ENCODE measurements at regions of chr3 and their contacts with region 1.

Region 1: DNA sequence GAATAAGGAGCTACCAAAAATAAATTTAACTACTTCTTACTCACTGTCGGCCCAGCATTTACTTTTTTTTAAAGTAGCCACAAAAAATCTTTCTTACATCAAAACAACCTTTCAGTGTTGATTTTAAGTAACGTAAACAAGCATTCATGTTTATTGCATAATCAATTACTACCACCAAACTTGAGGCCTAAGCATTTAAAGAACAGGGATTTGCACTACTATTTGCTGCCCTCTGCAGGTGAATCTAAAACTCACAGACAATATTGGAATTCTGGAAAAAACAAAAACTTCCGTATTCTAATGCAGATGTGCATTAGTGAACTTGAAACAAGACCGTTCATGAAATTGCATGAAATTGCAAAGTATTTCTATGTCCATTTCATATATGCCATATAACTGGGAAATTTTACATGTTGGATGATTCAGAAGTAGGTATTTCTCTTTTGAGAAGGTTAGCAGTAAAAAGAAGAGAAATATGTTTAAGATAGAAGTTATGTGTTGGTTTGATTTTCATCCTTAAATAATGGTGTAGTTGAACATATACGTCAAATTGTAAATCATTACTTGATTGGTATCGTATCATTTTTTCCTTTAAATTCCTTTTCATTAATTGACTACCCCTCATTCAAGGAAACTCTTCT is 55.6 kb downstream of the CGGBP1 start:
- DNase-seq: peak in 1 of 2 experiments; percentile 44
- H3K4me3 ChIP-seq: no peak overlapping the region
- H3K4me3 Mint-ChIP-seq: no peak overlapping the region
- H3K27ac Mint-ChIP-seq: no peak overlapping the region
- H3K4me1 ChIP-seq: no peaks in the 10 kb centered on the region
- H3K4me1 Mint-ChIP-seq: no peaks in the 10 kb centered on the region
- H3K27me3 ChIP-seq: no peaks in the 10 kb centered on the region
- H3K27me3 Mint-ChIP-seq: peaks cover 4% of the 10 kb centered on the region
- CTCF ChIP-seq: peak; percentile 60 to 70

Region 2: GRCh38 chr3:87350364-87351199 is 652.7 kb before region 1 on chr3:
- CTCF ChIA-PET with region 1: interaction called, 5 read pairs
- POLR2A ChIA-PET with region 1: no interaction called
- intact Hi-C with region 1: loop called (anchors 1 kb)
- DNase-seq: peak; percentile 22 to 36
- H3K4me3 ChIP-seq: no peak overlapping the region
- H3K4me3 Mint-ChIP-seq: no peak overlapping the region
- H3K27ac Mint-ChIP-seq: no peak overlapping the region
- H3K4me1 ChIP-seq: peaks cover 8% of the 10 kb centered on the region; the same call in 1 of the 2 replicates
- H3K4me1 Mint-ChIP-seq: peaks cover 7% of the 10 kb centered on the region
- H3K27me3 ChIP-seq: no peaks in the 10 kb centered on the region
- H3K27me3 Mint-ChIP-seq: no peaks in the 10 kb centered on the region
- CTCF ChIP-seq: peak; percentile 77 to 80

Region 3: DNA sequence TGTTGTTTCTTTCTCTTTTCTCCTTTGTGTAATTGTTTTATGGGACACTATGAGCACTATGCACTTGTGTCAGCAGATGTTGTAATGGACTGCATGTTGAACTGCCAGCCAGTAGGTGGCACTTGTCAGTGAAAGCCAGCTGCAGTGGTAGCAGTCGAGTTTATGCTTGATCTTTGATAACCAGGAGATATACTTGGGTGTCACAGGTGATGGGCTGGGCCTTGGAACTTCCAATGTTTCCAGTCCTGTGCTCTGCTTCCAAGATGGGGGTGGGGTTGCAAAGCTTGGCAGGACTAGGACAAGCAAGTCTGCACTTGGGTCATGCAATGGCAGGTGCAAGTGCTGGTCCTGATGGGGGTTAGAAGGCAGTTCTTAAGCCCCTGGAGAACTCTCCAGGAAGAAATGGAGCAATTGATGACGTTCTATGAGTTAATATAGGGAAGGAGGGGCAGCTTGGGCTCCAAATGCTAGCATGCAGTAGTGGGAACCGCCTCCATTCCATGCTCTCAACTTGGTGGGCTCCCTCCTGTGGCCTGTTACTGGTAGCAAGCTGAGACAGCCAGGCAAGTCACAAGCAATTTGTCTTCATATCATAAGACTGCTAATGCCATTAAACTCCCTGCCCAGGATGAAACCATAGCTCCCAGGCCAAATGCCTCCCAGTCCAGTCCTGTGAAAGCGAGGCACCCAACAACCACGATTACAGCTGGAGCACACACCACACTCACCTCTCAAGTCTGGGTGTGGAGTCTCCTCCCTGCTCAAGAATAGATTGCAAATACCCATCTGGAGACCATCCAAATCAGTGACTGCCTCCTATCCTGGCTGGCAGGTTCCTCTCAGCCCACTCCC is 231.7 kb before region 1 on chr3:
- CTCF ChIA-PET with region 1: interaction called, 3 read pairs
- POLR2A ChIA-PET with region 1: no interaction called
- intact Hi-C with region 1: loop called (anchors 1 kb)
- DNase-seq: peak; percentile 45 to 46
- H3K4me3 ChIP-seq: no peak overlapping the region
- H3K4me3 Mint-ChIP-seq: no peak overlapping the region
- H3K27ac Mint-ChIP-seq: no peak overlapping the region
- H3K4me1 ChIP-seq: no peaks in the 10 kb centered on the region
- H3K4me1 Mint-ChIP-seq: no peaks in the 10 kb centered on the region
- H3K27me3 ChIP-seq: no peaks in the 10 kb centered on the region
- H3K27me3 Mint-ChIP-seq: peaks cover 6% of the 10 kb centered on the region
- CTCF ChIP-seq: peak; percentile 43 to 75

Region 4: DNA sequence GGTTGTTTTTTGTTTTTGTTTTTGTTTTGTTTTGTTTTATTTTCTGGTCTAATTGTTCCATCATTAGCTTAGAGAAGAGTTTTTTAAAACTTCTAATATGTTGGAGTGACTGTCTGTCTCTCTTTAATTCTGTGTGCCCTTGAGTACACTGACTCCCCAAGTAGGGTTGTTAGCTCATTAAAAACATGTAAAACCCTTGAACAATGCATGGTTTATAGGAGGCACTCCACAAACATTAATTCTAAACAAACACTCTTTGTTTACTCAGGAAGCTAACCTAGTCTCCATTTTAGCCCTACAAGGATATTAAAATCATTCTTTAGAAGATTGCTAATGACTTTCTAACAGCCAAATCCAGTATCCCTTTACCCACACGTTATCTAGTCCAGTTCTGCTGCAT is 44.9 kb before region 1 on chr3:
- CTCF ChIA-PET with region 1: no interaction called
- POLR2A ChIA-PET with region 1: no interaction called
- intact Hi-C with region 1: no loop called
- DNase-seq: no peak
- H3K4me3 ChIP-seq: no peak overlapping the region
- H3K4me3 Mint-ChIP-seq: no peak overlapping the region
- H3K27ac Mint-ChIP-seq: no peak overlapping the region
- H3K4me1 ChIP-seq: no peaks in the 10 kb centered on the region
- H3K4me1 Mint-ChIP-seq: no peaks in the 10 kb centered on the region
- H3K27me3 ChIP-seq: no peaks in the 10 kb centered on the region
- H3K27me3 Mint-ChIP-seq: no peaks in the 10 kb centered on the region
- CTCF ChIP-seq: no peak

Region 5: GRCh38 chr3:88113311-88114162 is 110.3 kb after region 1 on chr3:
- CTCF ChIA-PET with region 1: interaction called, 3 read pairs
- POLR2A ChIA-PET with region 1: no interaction called
- intact Hi-C with region 1: loop called (anchors 2 kb)
- DNase-seq: peak; percentile 50 to 79
- H3K4me3 ChIP-seq: no peak overlapping the region
- H3K4me3 Mint-ChIP-seq: no peak overlapping the region
- H3K27ac Mint-ChIP-seq: no peak overlapping the region
- H3K4me1 ChIP-seq: no peaks in the 10 kb centered on the region
- H3K4me1 Mint-ChIP-seq: no peaks in the 10 kb centered on the region
- H3K27me3 ChIP-seq: no peaks in the 10 kb centered on the region
- H3K27me3 Mint-ChIP-seq: no peaks in the 10 kb centered on the region
- CTCF ChIP-seq: peak; percentile 49 to 70